CD8-positive, alpha-beta T cell (primary cell): ENCODE measurements at regions of chr1 and their contacts with region 1.

Region 1: DNA sequence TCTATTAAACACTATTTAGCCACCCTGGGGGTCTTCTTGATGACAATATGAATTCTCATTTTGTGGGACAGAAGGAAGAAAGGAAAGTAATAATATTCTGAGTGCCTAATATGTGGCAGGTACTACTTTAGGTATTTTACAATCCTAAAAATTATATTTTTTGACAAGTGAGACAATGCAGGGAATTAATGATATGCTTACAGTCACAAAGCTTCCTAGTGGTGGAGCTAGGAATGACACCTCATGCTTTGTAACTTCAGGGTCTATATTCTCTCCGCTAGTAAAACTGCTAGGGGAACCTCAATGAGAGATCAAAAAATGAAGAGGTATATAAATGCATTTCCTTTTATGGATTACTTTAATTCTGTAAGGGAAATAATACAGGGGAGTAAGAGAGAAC is 44.3 kb downstream of the TPR start:
- DNase-seq: peak in 1 of 9 experiments; percentile 28
- ATAC-seq: no peak
- H3K4me3 ChIP-seq: no peak overlapping the region
- H3K4me3 Mint-ChIP-seq: no peak overlapping the region
- H3K27ac ChIP-seq: no peak overlapping the region
- H3K27ac Mint-ChIP-seq: no peak overlapping the region
- H3K4me1 ChIP-seq: no peaks in the 10 kb centered on the region
- H3K4me1 Mint-ChIP-seq: peaks cover 2% of the 10 kb centered on the region
- H3K27me3 ChIP-seq: no peaks in the 10 kb centered on the region
- H3K27me3 Mint-ChIP-seq: no peaks in the 10 kb centered on the region
- CTCF ChIP-seq: no peak

Region 2: GRCh38 chr1:185483664-185484450 is 846.9 kb before region 1 on chr1:
- CTCF ChIA-PET with region 1: no interaction called
- POLR2A ChIA-PET with region 1: no interaction called
- intact Hi-C with region 1: no loop called
- DNase-seq: peak in 1 of 9 experiments; percentile 4
- ATAC-seq: no peak
- H3K4me3 ChIP-seq: no peak overlapping the region
- H3K4me3 Mint-ChIP-seq: no peak overlapping the region
- H3K27ac ChIP-seq: no peak overlapping the region
- H3K27ac Mint-ChIP-seq: no peak overlapping the region
- H3K4me1 ChIP-seq: no peaks in the 10 kb centered on the region
- H3K4me1 Mint-ChIP-seq: no peaks in the 10 kb centered on the region
- H3K27me3 ChIP-seq: no peaks in the 10 kb centered on the region
- H3K27me3 Mint-ChIP-seq: no peaks in the 10 kb centered on the region
- CTCF ChIP-seq: no peak

Region 3: GRCh38 chr1:186315570-186315969 is 15.2 kb before region 1 on chr1:
- CTCF ChIA-PET with region 1: interaction called, 5 read pairs
- POLR2A ChIA-PET with region 1: no interaction called
- intact Hi-C with region 1: loop called in 1 of 2 experiments (anchors 1 kb)
- DNase-seq: no peak
- ATAC-seq: no peak
- H3K4me3 ChIP-seq: no peak overlapping the region
- H3K4me3 Mint-ChIP-seq: no peak overlapping the region
- H3K27ac ChIP-seq: no peak overlapping the region
- H3K27ac Mint-ChIP-seq: peak overlapping the region; percentile 8
- H3K4me1 ChIP-seq: no peaks in the 10 kb centered on the region
- H3K4me1 Mint-ChIP-seq: peaks cover 4% of the 10 kb centered on the region
- H3K27me3 ChIP-seq: no peaks in the 10 kb centered on the region
- H3K27me3 Mint-ChIP-seq: no peaks in the 10 kb centered on the region
- CTCF ChIP-seq: no peak

Region 4: DNA sequence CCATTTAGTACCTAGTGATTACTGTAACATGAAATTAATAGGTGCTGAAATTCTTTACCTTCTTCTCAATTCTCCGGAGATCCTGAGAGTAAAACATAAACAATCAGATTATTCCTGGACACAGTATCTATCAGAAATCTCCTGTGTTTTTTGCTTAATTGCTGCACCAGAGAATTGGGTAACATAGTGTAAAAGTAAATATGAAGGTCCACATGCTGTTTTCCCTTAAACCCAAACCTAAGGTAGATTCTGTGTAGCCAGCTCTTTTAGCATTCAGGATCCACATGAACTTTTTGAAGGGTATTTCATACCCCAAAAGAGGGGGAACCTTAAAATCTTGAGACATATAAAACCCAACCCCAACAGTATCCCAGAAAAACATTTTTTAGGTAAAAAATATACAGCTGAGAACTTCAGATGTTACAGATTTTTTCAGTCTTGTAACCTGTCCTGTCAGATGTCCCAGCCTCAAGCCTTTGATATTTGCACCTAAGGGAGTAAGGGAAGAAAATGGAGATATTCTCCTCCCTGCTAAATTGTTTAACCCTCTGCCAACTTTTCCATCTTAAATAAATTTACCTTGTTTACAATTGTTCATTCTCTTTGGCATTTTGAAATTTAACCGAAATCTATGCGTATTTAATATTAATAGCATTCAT is 56.1 kb after region 1 on chr1:
- CTCF ChIA-PET with region 1: no interaction called
- POLR2A ChIA-PET with region 1: no interaction called
- intact Hi-C with region 1: loop called in 1 of 2 experiments (anchors 10 kb)
- DNase-seq: no peak
- ATAC-seq: no peak
- H3K4me3 ChIP-seq: no peak overlapping the region
- H3K4me3 Mint-ChIP-seq: no peak overlapping the region
- H3K27ac ChIP-seq: no peak overlapping the region
- H3K27ac Mint-ChIP-seq: no peak overlapping the region
- H3K4me1 ChIP-seq: no peaks in the 10 kb centered on the region
- H3K4me1 Mint-ChIP-seq: no peaks in the 10 kb centered on the region
- H3K27me3 ChIP-seq: no peaks in the 10 kb centered on the region
- H3K27me3 Mint-ChIP-seq: no peaks in the 10 kb centered on the region
- CTCF ChIP-seq: no peak